CD8-positive, alpha-beta T cell (primary cell): ENCODE measurements at regions of chr22 and their contacts with region 1.

Region 1: DNA sequence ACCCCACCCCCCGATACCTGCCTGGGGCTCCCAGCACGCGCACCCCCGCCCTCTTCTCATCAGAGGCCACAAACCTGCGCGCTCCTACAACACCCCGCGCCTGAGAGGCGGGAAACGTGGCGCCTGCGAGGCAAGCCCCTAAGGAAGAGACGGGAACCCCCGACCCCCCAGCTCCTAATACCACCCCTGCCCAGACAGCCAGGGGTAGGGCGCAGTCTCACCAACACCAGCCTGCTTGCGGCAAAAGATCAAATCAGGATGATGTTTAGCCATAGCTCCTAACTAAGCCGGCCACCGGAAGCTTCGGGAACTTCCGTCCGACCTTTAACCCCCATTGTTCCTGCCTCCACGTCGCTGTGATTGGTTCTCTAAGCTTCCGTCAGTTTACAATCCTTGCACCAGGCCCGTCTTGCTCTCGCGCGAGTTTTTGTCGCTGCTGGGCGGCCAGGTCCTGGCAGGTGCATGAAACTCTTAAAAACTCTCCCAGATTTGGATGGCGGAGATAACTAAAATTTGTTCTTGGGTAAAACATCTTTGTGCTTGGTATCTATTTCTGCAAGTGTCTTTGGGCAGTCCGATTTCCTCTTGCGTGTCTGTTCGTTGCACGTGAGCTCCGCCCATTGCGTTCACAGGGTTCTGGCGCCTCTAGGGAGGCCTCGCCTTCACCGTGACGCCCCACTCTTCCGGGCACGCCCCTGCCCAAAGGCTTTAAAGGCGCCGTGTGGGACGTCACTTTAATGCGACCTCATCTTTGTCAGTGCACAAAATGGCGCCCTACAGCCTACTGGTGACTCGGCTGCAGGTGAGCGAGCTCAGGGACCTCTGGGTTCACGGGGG is at the starts of genes ACO2 and PHF5A:
- DNase-seq: peak; percentile 97 to 99 (median 98)
- ATAC-seq: peak; percentile 90
- H3K4me3 ChIP-seq: peak within 1 kb of the TSS; percentile 92 to 94
- H3K4me3 Mint-ChIP-seq: peak within 1 kb of the TSS; percentile 91
- H3K27ac ChIP-seq: peak within 1 kb of the TSS; percentile 97 to 99
- H3K27ac Mint-ChIP-seq: peak within 1 kb of the TSS; percentile 99
- H3K4me1 ChIP-seq: peaks cover 23% of the 10 kb centered on the region
- H3K4me1 Mint-ChIP-seq: peaks cover 56% of the 10 kb centered on the region
- H3K27me3 ChIP-seq: no peaks in the 10 kb centered on the region
- H3K27me3 Mint-ChIP-seq: no peaks in the 10 kb centered on the region
- CTCF ChIP-seq: no peak
- total RNA-seq, gene ACO2: 83.7 to 95.2 TPM
- total RNA-seq, gene PHF5A: 52.9 to 57.4 TPM

Region 2: DNA sequence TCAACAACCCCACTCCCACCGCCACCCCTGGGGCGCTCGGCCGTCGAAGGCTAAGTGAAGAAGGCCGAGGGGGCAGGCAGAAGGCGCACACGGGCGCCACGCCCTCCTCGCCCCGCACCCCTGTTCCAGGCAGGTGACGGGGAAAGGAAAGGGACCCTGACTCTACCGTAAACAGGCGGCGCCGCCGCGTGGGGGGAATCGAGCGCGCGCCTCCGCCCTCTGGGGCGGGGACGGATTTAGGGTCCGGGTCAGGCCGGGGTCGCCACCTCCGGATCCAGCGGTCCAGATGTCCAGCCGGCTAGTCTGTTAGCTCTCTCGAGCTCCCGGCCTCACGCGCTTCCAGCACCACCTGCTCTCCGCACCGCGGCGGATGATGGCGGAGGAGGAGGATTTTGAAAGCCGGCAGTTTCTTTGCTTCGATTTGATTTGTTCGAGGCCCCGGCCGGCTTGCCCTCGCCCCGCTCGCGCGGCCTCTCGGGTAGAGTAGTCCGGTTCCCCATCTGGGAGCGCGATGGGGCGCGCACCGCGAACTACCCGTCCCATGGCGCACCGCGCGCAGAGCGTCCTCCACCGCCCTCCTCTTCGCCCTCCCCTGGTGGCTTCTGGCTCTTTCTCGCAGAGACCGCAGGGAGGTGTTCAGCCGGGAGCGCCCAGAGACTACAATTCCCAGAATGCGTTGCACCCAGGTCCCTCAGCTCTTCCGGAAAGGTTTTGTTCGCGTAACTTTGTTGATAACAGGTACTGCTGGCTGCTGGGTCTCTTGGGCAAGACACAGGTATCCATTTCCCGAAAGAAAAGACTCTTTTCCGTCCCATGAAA is 182.6 kb before region 1 on chr22 and contains the start of gene RANGAP1:
- CTCF ChIA-PET with region 1: no interaction called
- POLR2A ChIA-PET with region 1: interaction called, 10 read pairs
- intact Hi-C with region 1: loop called (anchors 1 to 5 kb)
- DNase-seq: peak; percentile 96 to 100 (median 98)
- ATAC-seq: peak; percentile 86
- H3K4me3 ChIP-seq: peak within 1 kb of the TSS; percentile 76 to 99
- H3K4me3 Mint-ChIP-seq: peak within 1 kb of the TSS; percentile 92
- H3K27ac ChIP-seq: peak within 1 kb of the TSS; percentile 87 to 95
- H3K27ac Mint-ChIP-seq: peak within 1 kb of the TSS; percentile 98
- H3K4me1 ChIP-seq: peaks cover 15% of the 10 kb centered on the region
- H3K4me1 Mint-ChIP-seq: peaks cover 32% of the 10 kb centered on the region
- H3K27me3 ChIP-seq: no peaks in the 10 kb centered on the region
- H3K27me3 Mint-ChIP-seq: no peaks in the 10 kb centered on the region
- CTCF ChIP-seq: no peak
- total RNA-seq, gene RANGAP1: 200 to 210 TPM

Region 3: DNA sequence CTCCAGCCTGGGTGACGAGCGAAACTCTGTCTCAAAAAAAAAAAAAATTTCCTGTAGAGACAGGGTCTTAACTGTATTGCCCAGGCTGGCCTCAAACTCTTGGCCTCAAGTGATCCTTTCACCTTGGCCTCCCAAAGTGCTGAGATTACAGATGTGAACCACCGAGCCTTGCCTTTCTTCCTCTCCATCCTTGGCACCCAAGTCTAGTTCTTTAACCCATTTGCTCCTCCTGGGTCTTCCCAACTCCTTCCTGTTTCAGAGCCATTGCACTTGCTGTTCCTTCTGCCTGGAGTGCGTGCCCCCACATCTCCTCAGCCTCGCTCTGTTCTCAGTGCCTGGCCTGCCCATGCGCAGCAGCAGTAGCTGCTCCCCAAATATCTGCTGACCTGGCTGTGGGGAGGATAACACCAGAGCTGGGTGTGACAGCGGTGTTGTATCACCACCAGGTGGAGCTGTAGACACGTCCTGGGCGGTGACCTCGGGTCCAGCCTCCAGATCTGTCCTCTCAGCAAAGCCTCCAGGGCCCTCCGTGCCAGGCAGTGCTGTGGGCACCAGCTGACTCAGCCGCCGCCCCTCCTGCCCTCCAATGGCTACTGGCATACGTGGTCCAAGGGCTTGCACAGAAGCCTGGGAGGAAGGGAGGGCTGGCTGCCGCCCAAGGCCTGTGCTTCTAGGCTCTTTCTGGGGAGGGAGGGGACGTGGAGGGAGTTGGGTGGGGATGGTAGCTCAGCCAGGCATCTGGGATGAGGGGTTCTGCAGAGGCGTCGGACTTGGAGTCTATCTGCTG is 64.9 kb before region 1 on chr22:
- CTCF ChIA-PET with region 1: interaction called, 13 read pairs
- POLR2A ChIA-PET with region 1: interaction called, 5 read pairs
- intact Hi-C with region 1: loop called in 1 of 2 experiments (anchors 2 kb)
- DNase-seq: peak; percentile 60 to 90 (median 81)
- ATAC-seq: peak; percentile 99
- H3K4me3 ChIP-seq: no peak overlapping the region
- H3K4me3 Mint-ChIP-seq: no peak overlapping the region
- H3K27ac ChIP-seq: no peak overlapping the region
- H3K27ac Mint-ChIP-seq: no peak overlapping the region
- H3K4me1 ChIP-seq: peaks cover 13% of the 10 kb centered on the region
- H3K4me1 Mint-ChIP-seq: peaks cover 11% of the 10 kb centered on the region
- H3K27me3 ChIP-seq: no peaks in the 10 kb centered on the region
- H3K27me3 Mint-ChIP-seq: no peaks in the 10 kb centered on the region
- CTCF ChIP-seq: peak; percentile 93

Region 4: GRCh38 chr22:41458161-41458728 is 10.4 kb before region 1 on chr22:
- CTCF ChIA-PET with region 1: interaction called, 3 read pairs
- POLR2A ChIA-PET with region 1: interaction called, 12 read pairs
- intact Hi-C with region 1: no loop called
- DNase-seq: no peak
- ATAC-seq: no peak
- H3K4me3 ChIP-seq: no peak overlapping the region
- H3K4me3 Mint-ChIP-seq: no peak overlapping the region
- H3K27ac ChIP-seq: no peak overlapping the region
- H3K27ac Mint-ChIP-seq: peak overlapping the region; percentile 27
- H3K4me1 ChIP-seq: no peaks in the 10 kb centered on the region
- H3K4me1 Mint-ChIP-seq: peaks cover 8% of the 10 kb centered on the region
- H3K27me3 ChIP-seq: no peaks in the 10 kb centered on the region
- H3K27me3 Mint-ChIP-seq: no peaks in the 10 kb centered on the region
- CTCF ChIP-seq: no peak

Region 5: GRCh38 chr22:41543854-41544670 is 75.5 kb after region 1 on chr22 and contains the start of gene POLR3H:
- CTCF ChIA-PET with region 1: interaction called, 3 read pairs
- POLR2A ChIA-PET with region 1: interaction called, 3 read pairs
- intact Hi-C with region 1: loop called (anchors 1 kb)
- DNase-seq: peak; percentile 92 to 99 (median 97)
- ATAC-seq: peak; percentile 98
- H3K4me3 ChIP-seq: peak within 1 kb of the TSS; percentile 75 to 95
- H3K4me3 Mint-ChIP-seq: peak within 1 kb of the TSS; percentile 98
- H3K27ac ChIP-seq: peak within 1 kb of the TSS; percentile 82 to 83
- H3K27ac Mint-ChIP-seq: peak within 1 kb of the TSS; percentile 94
- H3K4me1 ChIP-seq: peaks cover 30% of the 10 kb centered on the region
- H3K4me1 Mint-ChIP-seq: peaks cover 40% of the 10 kb centered on the region
- H3K27me3 ChIP-seq: no peaks in the 10 kb centered on the region
- H3K27me3 Mint-ChIP-seq: no peaks in the 10 kb centered on the region
- CTCF ChIP-seq: no peak
- total RNA-seq, gene POLR3H: 11.2 to 11.7 TPM

Region 6: GRCh38 chr22:41621099-41621910 is 152.7 kb after region 1 on chr22 and contains the start of gene XRCC6:
- CTCF ChIA-PET with region 1: no interaction called
- POLR2A ChIA-PET with region 1: interaction called, 6 read pairs
- intact Hi-C with region 1: loop called (anchors 1 kb)
- DNase-seq: peak; percentile 99 to 100 (median 100)
- ATAC-seq: peak; percentile 93
- H3K4me3 ChIP-seq: peak within 1 kb of the TSS; percentile 84 to 100
- H3K4me3 Mint-ChIP-seq: peak within 1 kb of the TSS; percentile 100
- H3K27ac ChIP-seq: peak within 1 kb of the TSS; percentile 95 to 100
- H3K27ac Mint-ChIP-seq: peak within 1 kb of the TSS; percentile 100
- H3K4me1 ChIP-seq: peaks cover 25% of the 10 kb centered on the region
- H3K4me1 Mint-ChIP-seq: peaks cover 52% of the 10 kb centered on the region
- H3K27me3 ChIP-seq: no peaks in the 10 kb centered on the region
- H3K27me3 Mint-ChIP-seq: no peaks in the 10 kb centered on the region
- CTCF ChIP-seq: no peak
- total RNA-seq, gene XRCC6: 202 to 205 TPM